Caco-2 (cell line): ENCODE measurements at regions of chr3 and their contacts with region 1.

Region 1: GRCh38 chr3:160027541-160028195 is 39.0 kb downstream of the IL12A start:
- DNase-seq: no peak
- H3K4me3 ChIP-seq: no peak overlapping the region
- H3K4me3 Mint-ChIP-seq: no peak overlapping the region
- H3K27ac Mint-ChIP-seq: no peak overlapping the region
- H3K4me1 ChIP-seq: no peaks in the 10 kb centered on the region
- H3K4me1 Mint-ChIP-seq: peaks cover 6% of the 10 kb centered on the region
- H3K27me3 ChIP-seq: no peaks in the 10 kb centered on the region
- H3K27me3 Mint-ChIP-seq: no peaks in the 10 kb centered on the region
- CTCF ChIP-seq: no peak

Region 2: GRCh38 chr3:159919873-159920272 is 107.8 kb before region 1 on chr3:
- CTCF ChIA-PET with region 1: no interaction called
- POLR2A ChIA-PET with region 1: no interaction called
- intact Hi-C with region 1: no loop called
- DNase-seq: no peak
- H3K4me3 ChIP-seq: no peak overlapping the region
- H3K4me3 Mint-ChIP-seq: no peak overlapping the region
- H3K27ac Mint-ChIP-seq: no peak overlapping the region
- H3K4me1 ChIP-seq: no peaks in the 10 kb centered on the region
- H3K4me1 Mint-ChIP-seq: no peaks in the 10 kb centered on the region
- H3K27me3 ChIP-seq: no peaks in the 10 kb centered on the region
- H3K27me3 Mint-ChIP-seq: no peaks in the 10 kb centered on the region
- CTCF ChIP-seq: no peak

Region 3: DNA sequence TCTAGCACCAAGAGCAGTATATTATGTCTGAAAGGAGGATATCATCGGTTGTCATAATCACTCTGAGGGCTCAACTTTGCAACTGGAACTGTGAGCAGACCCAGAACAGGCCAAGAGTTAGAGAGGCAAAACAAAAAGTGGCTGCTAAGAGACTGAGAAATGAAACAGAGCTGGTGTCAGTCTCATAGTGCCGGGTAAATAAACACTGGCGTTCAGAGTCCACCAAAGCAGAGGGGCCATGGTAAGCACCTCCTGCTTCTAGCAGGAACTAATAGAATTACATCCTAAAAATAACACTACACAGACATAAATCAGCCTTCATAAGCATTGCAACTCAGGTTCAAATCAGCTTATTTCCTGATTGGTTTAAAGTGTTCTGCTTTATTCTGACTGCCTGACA is 49.3 kb before region 1 on chr3:
- CTCF ChIA-PET with region 1: no interaction called
- POLR2A ChIA-PET with region 1: no interaction called
- intact Hi-C with region 1: no loop called
- DNase-seq: no peak
- H3K4me3 ChIP-seq: no peak overlapping the region
- H3K4me3 Mint-ChIP-seq: no peak overlapping the region
- H3K27ac Mint-ChIP-seq: no peak overlapping the region
- H3K4me1 ChIP-seq: peaks cover 10% of the 10 kb centered on the region; the same call in 1 of the 2 replicates
- H3K4me1 Mint-ChIP-seq: peaks cover 8% of the 10 kb centered on the region
- H3K27me3 ChIP-seq: no peaks in the 10 kb centered on the region
- H3K27me3 Mint-ChIP-seq: no peaks in the 10 kb centered on the region
- CTCF ChIP-seq: no peak

Region 4: GRCh38 chr3:160106905-160107861 is 79.5 kb after region 1 on chr3:
- CTCF ChIA-PET with region 1: no interaction called
- POLR2A ChIA-PET with region 1: no interaction called
- intact Hi-C with region 1: loop called (anchors 1 kb)
- DNase-seq: peak; percentile 78 to 80
- H3K4me3 ChIP-seq: no peak overlapping the region
- H3K4me3 Mint-ChIP-seq: peak overlapping the region; percentile 28
- H3K27ac Mint-ChIP-seq: peak overlapping the region; percentile 90
- H3K4me1 ChIP-seq: peaks cover 25% of the 10 kb centered on the region
- H3K4me1 Mint-ChIP-seq: peaks cover 20% of the 10 kb centered on the region
- H3K27me3 ChIP-seq: no peaks in the 10 kb centered on the region
- H3K27me3 Mint-ChIP-seq: no peaks in the 10 kb centered on the region
- CTCF ChIP-seq: no peak

Region 5: GRCh38 chr3:160163229-160163878 is 135.7 kb after region 1 on chr3:
- CTCF ChIA-PET with region 1: interaction called, 15 read pairs
- POLR2A ChIA-PET with region 1: no interaction called
- intact Hi-C with region 1: loop called (anchors 1 kb)
- DNase-seq: peak in 1 of 2 experiments; percentile 27
- H3K4me3 ChIP-seq: no peak overlapping the region
- H3K4me3 Mint-ChIP-seq: no peak overlapping the region
- H3K27ac Mint-ChIP-seq: no peak overlapping the region
- H3K4me1 ChIP-seq: peaks cover 7% of the 10 kb centered on the region
- H3K4me1 Mint-ChIP-seq: peaks cover 7% of the 10 kb centered on the region
- H3K27me3 ChIP-seq: no peaks in the 10 kb centered on the region
- H3K27me3 Mint-ChIP-seq: no peaks in the 10 kb centered on the region
- CTCF ChIP-seq: peak; percentile 36 to 55

Region 6: DNA sequence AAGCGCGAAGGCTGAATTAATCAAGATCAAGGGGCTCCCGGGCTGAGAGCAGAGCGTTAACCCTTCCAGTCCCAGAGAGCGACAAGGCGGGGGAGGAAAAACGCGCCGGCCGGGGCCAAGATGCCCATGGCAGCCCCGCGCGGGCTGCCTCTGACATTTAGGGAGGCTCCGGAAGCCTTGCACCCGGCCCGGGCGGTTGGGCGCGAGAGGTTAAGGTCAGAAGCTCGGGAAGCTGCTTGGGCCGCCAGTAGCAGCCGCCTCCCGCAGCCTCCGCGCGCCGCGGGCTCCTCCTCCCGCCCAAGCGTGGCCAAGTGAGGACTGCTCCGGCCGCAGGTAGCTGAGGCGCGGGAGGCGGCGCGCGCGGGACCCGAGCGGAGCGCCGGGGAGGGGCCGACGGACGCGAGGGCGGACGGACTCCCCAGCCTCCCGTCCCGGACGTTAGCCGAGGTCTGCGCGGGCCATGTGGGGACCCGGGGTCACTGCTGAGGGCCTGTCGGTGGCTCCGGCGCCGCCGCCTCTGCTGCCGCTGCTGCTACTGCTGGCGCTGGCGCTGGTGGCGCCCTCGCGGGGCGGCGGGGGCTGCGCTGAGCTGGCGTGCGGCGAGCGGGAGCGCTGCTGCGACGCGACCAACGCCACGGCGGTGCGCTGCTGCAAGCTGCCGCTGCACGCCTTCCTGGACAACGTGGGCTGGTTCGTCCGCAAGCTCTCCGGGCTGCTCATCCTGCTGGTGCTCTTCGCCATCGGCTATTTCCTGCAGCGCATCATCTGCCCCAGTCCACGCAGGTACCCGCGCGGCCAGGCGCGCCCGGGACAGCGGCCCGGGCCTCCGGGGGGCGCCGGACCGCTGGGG is 197.7 kb after region 1 on chr3 and contains the start of gene C3orf80:
- CTCF ChIA-PET with region 1: interaction called, 12 read pairs
- POLR2A ChIA-PET with region 1: no interaction called
- intact Hi-C with region 1: loop called (anchors 1 kb)
- DNase-seq: peak; percentile 67 to 80
- H3K4me3 ChIP-seq: peak within 1 kb of the TSS; percentile 86
- H3K4me3 Mint-ChIP-seq: peak within 1 kb of the TSS; percentile 90
- H3K27ac Mint-ChIP-seq: peak within 1 kb of the TSS; percentile 70
- H3K4me1 ChIP-seq: peaks cover 10% of the 10 kb centered on the region
- H3K4me1 Mint-ChIP-seq: no peaks in the 10 kb centered on the region
- H3K27me3 ChIP-seq: no peaks in the 10 kb centered on the region
- H3K27me3 Mint-ChIP-seq: no peaks in the 10 kb centered on the region
- CTCF ChIP-seq: peak; percentile 9 to 21
- total RNA-seq, gene C3orf80: 3.2 and 3.7 TPM in 2 replicates

Region 7: GRCh38 chr3:160413613-160414248 is 386.1 kb after region 1 on chr3:
- CTCF ChIA-PET with region 1: interaction called, 3 read pairs
- POLR2A ChIA-PET with region 1: no interaction called
- intact Hi-C with region 1: loop called (anchors 1 kb)
- DNase-seq: peak; percentile 70 to 81
- H3K4me3 ChIP-seq: no peak overlapping the region
- H3K4me3 Mint-ChIP-seq: no peak overlapping the region
- H3K27ac Mint-ChIP-seq: no peak overlapping the region
- H3K4me1 ChIP-seq: no peaks in the 10 kb centered on the region
- H3K4me1 Mint-ChIP-seq: no peaks in the 10 kb centered on the region
- H3K27me3 ChIP-seq: no peaks in the 10 kb centered on the region
- H3K27me3 Mint-ChIP-seq: no peaks in the 10 kb centered on the region
- CTCF ChIP-seq: peak; percentile 81 to 83